ENCODE measurements at regions of chr9 and their contacts with region 1.

Region 1: GRCh38 chr9:107894572-107895261 is 405.1 kb upstream of the KLF4 start:
- DNase-seq: peak; percentile 85
- H3K4me3 ChIP-seq: no peak overlapping the region
- H3K27ac ChIP-seq: peak overlapping the region; percentile 16 to 59 (median 50)
- H3K4me1 ChIP-seq: peaks cover 0 to 18% (median 17%) of the 10 kb centered on the region in 4 donors
- H3K27me3 ChIP-seq: no peaks in the 10 kb centered on the region
- CTCF ChIP-seq: no peak
- EP300 ChIP-seq: no peak
- POLR2A ChIP-seq: no peak

Region 2: GRCh38 chr9:107732781-107733522 is 161.8 kb before region 1 on chr9:
- intact Hi-C with region 1: loop called (anchors 10 kb)
- DNase-seq: no peak
- H3K4me3 ChIP-seq: peak overlapping the region; percentile 8 to 38 (median 23)
- H3K27ac ChIP-seq: peak overlapping the region; percentile 72 to 81 (median 78)
- H3K4me1 ChIP-seq: peaks cover 18 to 41% (median 38%) of the 10 kb centered on the region in 4 donors
- H3K27me3 ChIP-seq: no peaks in the 10 kb centered on the region
- CTCF ChIP-seq: no peak
- EP300 ChIP-seq: no peak
- POLR2A ChIP-seq: no peak

Measured in esophagus muscularis mucosa (tissue), 4 donors.